Right lobe of liver (tissue), 6 donors: ENCODE measurements at regions of chr19 and their contacts with region 1.

Region 1: DNA sequence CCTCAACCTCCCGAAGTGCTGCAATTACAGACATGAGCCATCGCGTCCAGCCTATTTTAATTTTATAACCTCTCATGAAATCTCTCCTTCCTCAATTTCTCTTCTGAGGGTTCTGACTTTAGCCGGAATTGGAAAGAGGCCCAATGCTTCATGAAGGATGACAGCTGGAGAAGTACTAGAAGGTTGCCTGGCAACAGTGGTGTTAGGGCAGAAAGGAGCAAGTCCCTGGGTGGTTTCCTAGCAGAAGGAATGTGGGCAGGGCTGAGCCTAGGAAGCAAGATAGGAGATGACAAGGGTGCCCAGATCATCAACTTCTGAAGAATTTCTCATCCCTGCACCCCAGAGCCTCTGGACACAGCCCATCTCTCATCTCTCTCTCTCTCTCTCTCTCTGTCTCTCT is 25.8 kb downstream of the CACNG6 start:
- DNase-seq: no peak
- ATAC-seq: no peak
- H3K4me3 ChIP-seq: no peak overlapping the region
- H3K27ac ChIP-seq: no peak overlapping the region
- H3K4me1 ChIP-seq: no peaks in the 10 kb centered on the region
- H3K27me3 ChIP-seq: no peaks in the 10 kb centered on the region
- CTCF ChIP-seq: no peak
- POLR2A ChIP-seq: no peak

Region 2: GRCh38 chr19:53912653-53913052 is 104.6 kb before region 1 on chr19:
- intact Hi-C with region 1: loop called in 1 of 2 experiments (anchors 10 kb)
- DNase-seq: no peak
- ATAC-seq: no peak
- H3K4me3 ChIP-seq: no peak overlapping the region
- H3K27ac ChIP-seq: no peak overlapping the region
- H3K4me1 ChIP-seq: no peaks in the 10 kb centered on the region
- H3K27me3 ChIP-seq: peaks cover 0 to 16% of the 10 kb centered on the region in 2 donors
- CTCF ChIP-seq: no peak
- POLR2A ChIP-seq: no peak

Region 3: DNA sequence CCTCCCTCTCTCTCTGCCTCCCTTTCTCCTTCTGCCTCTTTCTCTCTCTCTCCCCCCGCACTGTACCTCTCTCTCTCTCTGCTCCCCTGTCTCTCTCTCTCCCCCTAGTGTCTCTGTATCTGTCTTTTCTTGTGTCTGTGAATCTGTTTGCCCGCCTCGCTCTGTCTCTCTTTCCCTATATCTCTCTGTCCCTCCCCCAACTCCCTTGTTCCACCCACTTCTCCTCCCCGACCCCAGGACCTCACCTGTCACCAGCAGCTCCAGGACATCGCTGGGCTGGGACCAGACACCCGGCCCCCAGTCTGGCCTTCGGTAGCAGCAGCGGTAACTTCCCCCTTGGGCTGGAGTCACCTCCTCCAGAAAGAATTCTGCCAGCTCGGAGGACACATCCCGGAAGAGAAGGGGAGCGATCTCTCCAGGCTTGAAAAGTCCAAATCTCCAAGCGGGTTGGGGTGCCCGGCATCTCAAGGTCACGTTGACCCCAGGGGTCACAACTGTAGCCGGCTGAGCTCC is 79.4 kb after region 1 on chr19:
- intact Hi-C with region 1: no loop called
- DNase-seq: peak in 1 of 3 donors; percentile 58
- ATAC-seq: peak in 3 of 4 donors; percentile 36 to 46 (median 36)
- H3K4me3 ChIP-seq: no peak overlapping the region
- H3K27ac ChIP-seq: peak overlapping the region in 1 of 3 donors; percentile 33
- H3K4me1 ChIP-seq: no peaks in the 10 kb centered on the region
- H3K27me3 ChIP-seq: no peaks in the 10 kb centered on the region
- CTCF ChIP-seq: no peak
- POLR2A ChIP-seq: no peak

Region 4: GRCh38 chr19:55461259-55461973 is 1444.2 kb after region 1 on chr19 and contains the start of gene ISOC2:
- intact Hi-C with region 1: no loop called
- DNase-seq: peak; percentile 100
- ATAC-seq: peak; percentile 88 to 94 (median 92)
- H3K4me3 ChIP-seq: peak within 1 kb of the TSS; percentile 72 to 97 (median 73)
- H3K27ac ChIP-seq: peak within 1 kb of the TSS; percentile 84 to 90 (median 85)
- H3K4me1 ChIP-seq: peaks cover 0 to 14% (median 6%) of the 10 kb centered on the region in 4 donors
- H3K27me3 ChIP-seq: no peaks in the 10 kb centered on the region
- CTCF ChIP-seq: peak in 1 of 4 donors; percentile 15
- POLR2A ChIP-seq: peak; percentile 93
- total RNA-seq, gene ISOC2: 69.4 to 222 (median 100) TPM